ENCODE measurements at regions of chr2 and their contacts with region 1.

Region 1: DNA sequence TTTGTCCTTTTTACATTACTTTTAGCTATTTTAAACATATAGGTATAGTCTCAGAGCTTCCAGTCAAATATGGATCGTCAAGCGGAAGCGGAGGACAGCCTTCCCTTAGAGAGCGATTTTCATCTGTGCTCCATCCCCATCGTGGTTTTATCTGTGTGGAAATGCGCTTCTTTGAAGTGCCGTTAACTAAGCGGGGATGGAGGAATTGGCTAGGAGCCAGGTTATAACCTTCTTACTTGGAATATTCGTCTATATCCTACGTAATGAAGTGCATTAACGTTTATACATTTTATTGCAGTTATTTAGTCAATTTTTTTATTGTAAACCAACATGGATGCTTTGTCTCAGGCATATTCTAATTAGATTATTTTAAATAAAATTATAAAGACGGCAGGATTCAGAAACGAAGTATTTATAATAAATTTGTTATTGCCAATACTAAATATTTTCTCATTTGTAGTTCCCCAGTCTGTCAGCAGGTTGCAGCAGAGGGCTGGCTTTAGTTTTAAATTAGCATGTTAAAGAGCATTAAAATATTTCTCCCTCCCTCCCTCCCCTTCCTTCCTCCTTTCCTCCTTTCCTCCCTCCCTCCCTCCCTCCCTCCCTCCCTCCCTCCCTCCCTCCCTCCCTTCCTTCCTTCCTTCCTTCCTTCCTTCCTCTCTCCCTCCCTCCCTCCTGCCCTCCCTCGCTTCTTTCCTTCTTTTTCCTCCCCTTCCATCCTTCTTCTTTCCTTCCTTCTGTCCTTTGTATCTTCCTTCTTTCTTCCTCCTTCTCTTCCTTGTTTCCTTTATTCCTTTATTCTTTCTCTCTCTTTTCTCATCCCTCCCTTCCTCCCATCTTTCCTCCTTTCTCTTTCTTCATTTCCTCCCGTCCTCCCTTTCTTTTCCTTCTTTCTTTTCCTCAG is 80.6 kb upstream of the DOCK10 start:
- DNase-seq: no peak
- ATAC-seq: no peak
- H3K4me3 Mint-ChIP-seq: no peak overlapping the region
- H3K27ac Mint-ChIP-seq: no peak overlapping the region
- H3K4me1 Mint-ChIP-seq: no peaks in the 10 kb centered on the region
- H3K27me3 Mint-ChIP-seq: peaks cover 6% of the 10 kb centered on the region
- CTCF ChIP-seq: no peak

Region 2: DNA sequence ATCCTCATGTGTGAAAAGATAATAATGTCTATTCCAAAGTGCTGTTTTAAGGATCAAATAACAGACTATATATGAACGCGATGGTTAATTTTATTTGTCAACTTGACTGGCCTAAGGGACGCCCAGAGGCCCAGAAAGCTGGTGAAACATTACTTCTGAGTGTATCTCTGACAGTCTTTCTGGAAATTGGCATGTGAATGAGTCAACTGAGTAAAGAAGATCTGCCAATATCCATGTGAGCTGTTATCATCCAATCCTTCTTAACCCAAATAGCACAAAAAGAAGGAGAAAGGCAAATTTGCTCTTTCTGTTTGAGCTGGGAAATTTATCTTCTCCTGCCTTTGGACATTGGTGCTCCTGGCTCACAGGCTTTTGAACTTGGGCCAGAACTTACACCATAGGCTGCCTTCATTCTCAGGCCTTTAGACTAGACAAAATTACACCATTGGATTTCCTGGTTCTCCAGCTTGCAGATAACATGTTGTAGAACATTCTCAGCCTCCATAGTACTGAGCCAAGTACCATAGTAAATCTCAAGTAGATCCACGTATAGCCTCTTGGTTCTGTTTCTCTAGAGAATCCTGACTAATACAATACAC is 34.1 kb after region 1 on chr2:
- CTCF ChIA-PET with region 1: no interaction called
- POLR2A ChIA-PET with region 1: no interaction called
- intact Hi-C with region 1: no loop called
- DNase-seq: no peak
- ATAC-seq: no peak
- H3K4me3 Mint-ChIP-seq: no peak overlapping the region
- H3K27ac Mint-ChIP-seq: no peak overlapping the region
- H3K4me1 Mint-ChIP-seq: no peaks in the 10 kb centered on the region
- H3K27me3 Mint-ChIP-seq: peaks cover 2% of the 10 kb centered on the region
- CTCF ChIP-seq: no peak

Region 3: DNA sequence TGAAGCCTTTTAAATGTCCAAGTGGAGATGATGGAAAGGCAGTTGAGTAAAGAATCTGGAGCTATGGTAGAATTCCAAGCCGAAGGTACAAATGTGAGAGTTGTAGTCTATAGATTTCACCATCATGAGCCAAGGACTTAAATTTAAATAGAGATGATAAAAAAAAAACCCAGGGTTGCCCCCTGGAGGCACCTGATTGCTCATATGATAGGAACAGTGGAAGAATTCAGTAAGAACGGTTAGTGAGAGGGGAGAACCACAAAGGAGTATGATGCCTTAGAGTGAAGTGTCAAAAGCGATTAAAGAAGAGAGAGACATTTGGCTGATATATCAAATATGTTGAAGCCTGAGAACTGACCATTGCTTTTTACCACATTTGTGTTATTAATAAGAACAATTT is 288.6 kb after region 1 on chr2:
- CTCF ChIA-PET with region 1: no interaction called
- POLR2A ChIA-PET with region 1: no interaction called
- intact Hi-C with region 1: loop called (anchors 1 kb)
- DNase-seq: no peak
- ATAC-seq: no peak
- H3K4me3 Mint-ChIP-seq: no peak overlapping the region
- H3K27ac Mint-ChIP-seq: no peak overlapping the region
- H3K4me1 Mint-ChIP-seq: no peaks in the 10 kb centered on the region
- H3K27me3 Mint-ChIP-seq: peaks cover 3% of the 10 kb centered on the region
- CTCF ChIP-seq: no peak

Region 4: GRCh38 chr2:225556461-225556860 is 433.6 kb after region 1 on chr2:
- CTCF ChIA-PET with region 1: interaction called, 3 read pairs
- POLR2A ChIA-PET with region 1: no interaction called
- intact Hi-C with region 1: loop called (anchors 2 kb)
- DNase-seq: no peak
- ATAC-seq: no peak
- H3K4me3 Mint-ChIP-seq: no peak overlapping the region
- H3K27ac Mint-ChIP-seq: no peak overlapping the region
- H3K4me1 Mint-ChIP-seq: no peaks in the 10 kb centered on the region
- H3K27me3 Mint-ChIP-seq: peaks cover 2% of the 10 kb centered on the region
- CTCF ChIP-seq: no peak

Measured in activated B cell treated with CpG ODN at 0.5 μM for 24 hours (primary cell).